Caco-2 (cell line): ENCODE measurements at regions of chr2 and their contacts with region 1.

Region 1: GRCh38 chr2:37896314-37896713 is 28.8 kb upstream of the RMDN2 start:
- DNase-seq: peak in 1 of 2 experiments; percentile 14
- H3K4me3 ChIP-seq: no peak overlapping the region
- H3K4me3 Mint-ChIP-seq: no peak overlapping the region
- H3K27ac Mint-ChIP-seq: no peak overlapping the region
- H3K4me1 ChIP-seq: peaks cover 19% of the 10 kb centered on the region
- H3K4me1 Mint-ChIP-seq: peaks cover 10% of the 10 kb centered on the region
- H3K27me3 ChIP-seq: no peaks in the 10 kb centered on the region
- H3K27me3 Mint-ChIP-seq: no peaks in the 10 kb centered on the region
- CTCF ChIP-seq: no peak

Region 2: DNA sequence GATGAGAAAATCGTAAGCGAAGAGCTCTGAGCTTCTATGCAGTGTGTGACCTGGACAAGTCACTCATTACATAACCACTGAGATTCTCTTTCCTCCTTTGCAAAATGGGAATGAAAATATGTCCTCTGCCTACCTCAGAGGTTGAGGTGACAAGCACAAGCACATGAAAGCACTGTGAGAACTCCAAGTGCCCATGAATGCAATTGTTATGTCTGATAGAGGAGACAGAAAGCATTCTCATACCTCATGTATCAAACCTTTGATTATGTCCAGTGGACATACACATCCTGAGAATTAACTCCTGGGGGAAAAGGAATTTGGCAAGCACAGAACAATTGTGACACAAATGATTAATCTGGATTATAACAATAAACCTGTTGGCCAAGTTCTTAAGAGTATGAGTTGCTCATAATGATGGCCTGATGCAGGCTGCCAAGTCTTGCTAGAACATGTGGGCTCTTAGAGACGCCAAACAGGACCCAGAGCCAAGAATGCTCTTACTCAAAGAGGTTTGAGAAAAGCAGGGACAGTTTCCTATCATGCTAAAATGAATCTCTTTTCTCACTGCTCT is 20.3 kb after region 1 on chr2:
- CTCF ChIA-PET with region 1: no interaction called
- POLR2A ChIA-PET with region 1: no interaction called
- intact Hi-C with region 1: loop called (anchors 2 kb)
- DNase-seq: no peak
- H3K4me3 ChIP-seq: no peak overlapping the region
- H3K4me3 Mint-ChIP-seq: no peak overlapping the region
- H3K27ac Mint-ChIP-seq: no peak overlapping the region
- H3K4me1 ChIP-seq: peaks cover 28% of the 10 kb centered on the region
- H3K4me1 Mint-ChIP-seq: peaks cover 7% of the 10 kb centered on the region
- H3K27me3 ChIP-seq: no peaks in the 10 kb centered on the region
- H3K27me3 Mint-ChIP-seq: no peaks in the 10 kb centered on the region
- CTCF ChIP-seq: no peak

Region 3: GRCh38 chr2:37925063-37925897 is 29.0 kb after region 1 on chr2 and contains the start of gene RMDN2:
- CTCF ChIA-PET with region 1: no interaction called
- POLR2A ChIA-PET with region 1: no interaction called
- intact Hi-C with region 1: loop called (anchors 1 kb)
- DNase-seq: peak; percentile 98 to 99
- H3K4me3 ChIP-seq: peak within 1 kb of the TSS; percentile 87
- H3K4me3 Mint-ChIP-seq: peak within 1 kb of the TSS; percentile 95
- H3K27ac Mint-ChIP-seq: peak within 1 kb of the TSS; percentile 84
- H3K4me1 ChIP-seq: peaks cover 25% of the 10 kb centered on the region
- H3K4me1 Mint-ChIP-seq: peaks cover 9% of the 10 kb centered on the region
- H3K27me3 ChIP-seq: no peaks in the 10 kb centered on the region
- H3K27me3 Mint-ChIP-seq: no peaks in the 10 kb centered on the region
- CTCF ChIP-seq: no peak
- total RNA-seq, gene RMDN2: 4.3 and 4.4 TPM in 2 replicates

Region 4: DNA sequence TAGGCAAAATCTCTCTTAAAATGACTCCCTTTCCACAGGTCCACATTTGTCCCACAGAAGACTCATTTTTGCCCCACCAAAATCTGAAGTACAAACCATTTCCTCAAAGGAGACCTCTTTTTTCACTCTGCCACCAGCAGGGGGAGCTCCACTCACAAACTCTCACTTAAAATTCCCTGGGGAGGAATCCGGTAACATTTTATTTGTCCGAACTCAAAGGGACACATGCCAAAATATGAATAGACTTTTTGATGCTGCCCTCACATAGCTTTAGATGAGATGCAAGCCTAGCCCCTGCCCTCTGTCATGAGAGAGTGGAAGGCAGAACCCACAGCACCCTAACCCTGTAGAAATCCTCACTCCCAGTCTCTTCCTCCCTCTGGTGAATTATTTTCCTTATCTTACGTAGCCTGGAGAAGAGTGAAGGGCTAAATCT is 85.9 kb after region 1 on chr2:
- CTCF ChIA-PET with region 1: no interaction called
- POLR2A ChIA-PET with region 1: interaction called, 4 read pairs
- intact Hi-C with region 1: loop called (anchors 2 kb)
- DNase-seq: peak; percentile 69 to 81
- H3K4me3 ChIP-seq: peak overlapping the region; percentile 16; the same call in 1 of the 2 replicates
- H3K4me3 Mint-ChIP-seq: peak overlapping the region; percentile 2
- H3K27ac Mint-ChIP-seq: no peak overlapping the region
- H3K4me1 ChIP-seq: no peaks in the 10 kb centered on the region
- H3K4me1 Mint-ChIP-seq: peaks cover 12% of the 10 kb centered on the region
- H3K27me3 ChIP-seq: no peaks in the 10 kb centered on the region; the same call in 1 of the 2 replicates
- H3K27me3 Mint-ChIP-seq: no peaks in the 10 kb centered on the region
- CTCF ChIP-seq: peak; percentile 91 to 92

Region 5: GRCh38 chr2:38214209-38214717 is 317.9 kb after region 1 on chr2:
- CTCF ChIA-PET with region 1: no interaction called
- POLR2A ChIA-PET with region 1: no interaction called
- intact Hi-C with region 1: no loop called
- DNase-seq: peak; percentile 26 to 57
- H3K4me3 ChIP-seq: no peak overlapping the region
- H3K4me3 Mint-ChIP-seq: no peak overlapping the region
- H3K27ac Mint-ChIP-seq: no peak overlapping the region
- H3K4me1 ChIP-seq: peaks cover 10% of the 10 kb centered on the region
- H3K4me1 Mint-ChIP-seq: peaks cover 14% of the 10 kb centered on the region
- H3K27me3 ChIP-seq: no peaks in the 10 kb centered on the region
- H3K27me3 Mint-ChIP-seq: no peaks in the 10 kb centered on the region
- CTCF ChIP-seq: no peak